A673 (cell line): ENCODE measurements at regions of chr12 and their contacts with region 1.

Region 1: GRCh38 chr12:64625243-64626077 is 15.2 kb downstream of the RASSF3 start:
- DNase-seq: peak; percentile 94
- H3K4me3 ChIP-seq: peak overlapping the region; percentile 28
- H3K27ac ChIP-seq: peak overlapping the region; percentile 80
- H3K4me1 ChIP-seq: peaks cover 36% of the 10 kb centered on the region
- H3K27me3 ChIP-seq: no peaks in the 10 kb centered on the region
- CTCF ChIP-seq: no peak

Region 2: GRCh38 chr12:64610149-64610678 is 15.2 kb before region 1 on chr12 and contains the start of gene RASSF3:
- CTCF ChIA-PET with region 1: interaction called, 3 read pairs
- POLR2A ChIA-PET with region 1: interaction called, 11 read pairs
- intact Hi-C with region 1: no loop called
- DNase-seq: peak; percentile 84
- H3K4me3 ChIP-seq: peak within 1 kb of the TSS; percentile 97
- H3K27ac ChIP-seq: peak within 1 kb of the TSS; percentile 88
- H3K4me1 ChIP-seq: peaks cover 4% of the 10 kb centered on the region
- H3K27me3 ChIP-seq: no peaks in the 10 kb centered on the region
- CTCF ChIP-seq: no peak
- total RNA-seq, gene RASSF3: 37.7 and 38.2 TPM in 2 replicates

Region 3: DNA sequence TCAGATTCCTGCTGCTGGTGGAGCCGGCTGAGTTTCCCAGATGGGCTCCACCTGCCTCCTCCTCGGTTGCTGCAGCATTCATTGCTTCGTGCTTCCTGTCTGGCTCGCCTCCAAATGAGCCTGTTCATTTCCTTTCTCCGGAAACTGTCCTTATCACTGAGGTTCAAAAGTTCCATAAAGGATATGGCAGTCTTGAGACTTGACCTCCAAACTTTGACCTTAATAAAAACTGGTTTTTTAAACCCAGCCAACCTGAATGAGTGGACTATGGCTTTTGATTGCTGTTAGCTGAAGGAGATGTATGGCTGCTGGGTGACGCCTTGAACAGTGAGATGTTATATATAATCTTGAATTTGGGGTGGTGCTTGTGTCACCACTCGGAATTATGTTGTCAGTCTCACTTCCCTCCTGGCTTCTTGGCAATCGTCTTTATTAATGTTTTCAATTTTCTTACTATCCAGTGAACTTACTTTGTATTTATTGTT is 47.5 kb after region 1 on chr12:
- CTCF ChIA-PET with region 1: no interaction called
- POLR2A ChIA-PET with region 1: no interaction called
- intact Hi-C with region 1: loop called (anchors 5 kb)
- DNase-seq: peak; percentile 93
- H3K4me3 ChIP-seq: no peak overlapping the region
- H3K27ac ChIP-seq: peak overlapping the region; percentile 77
- H3K4me1 ChIP-seq: peaks cover 71% of the 10 kb centered on the region
- H3K27me3 ChIP-seq: no peaks in the 10 kb centered on the region
- CTCF ChIP-seq: no peak